WTC11 (cell line): ENCODE measurements at regions of chr11 and their contacts with region 1.

Region 1: GRCh38 chr11:120645639-120646038 is 134.1 kb downstream of the GRIK4 start:
- DNase-seq: peak; percentile 85
- ATAC-seq: peak; percentile 76
- H3K4me3 Mint-ChIP-seq: peak overlapping the region; percentile 48
- H3K27ac Mint-ChIP-seq: no peak overlapping the region
- H3K4me1 Mint-ChIP-seq: peaks cover 46% of the 10 kb centered on the region
- H3K27me3 Mint-ChIP-seq: peaks cover 98% of the 10 kb centered on the region
- CTCF ChIP-seq: no peak

Region 2: GRCh38 chr11:120511116-120511819 is 134.4 kb before region 1 on chr11 and contains the start of gene GRIK4:
- CTCF ChIA-PET with region 1: interaction called, 15 read pairs
- POLR2A ChIA-PET with region 1: no interaction called
- DNase-seq: peak; percentile 92
- ATAC-seq: peak; percentile 87
- H3K4me3 Mint-ChIP-seq: peak within 1 kb of the TSS; percentile 61
- H3K27ac Mint-ChIP-seq: no peak within 1 kb of the TSS
- H3K4me1 Mint-ChIP-seq: peaks cover 11% of the 10 kb centered on the region
- H3K27me3 Mint-ChIP-seq: peaks cover 25% of the 10 kb centered on the region
- CTCF ChIP-seq: peak; percentile 92
- total RNA-seq, gene GRIK4: 2.9 to 3.6 TPM (median 3.3 TPM) in 3 replicates

Region 3: GRCh38 chr11:120632579-120632978 is 13.1 kb before region 1 on chr11:
- CTCF ChIA-PET with region 1: interaction called, 10 read pairs
- POLR2A ChIA-PET with region 1: no interaction called
- DNase-seq: no peak
- ATAC-seq: peak; percentile 74
- H3K4me3 Mint-ChIP-seq: no peak overlapping the region
- H3K27ac Mint-ChIP-seq: no peak overlapping the region
- H3K4me1 Mint-ChIP-seq: peaks cover 34% of the 10 kb centered on the region
- H3K27me3 Mint-ChIP-seq: peaks cover 14% of the 10 kb centered on the region
- CTCF ChIP-seq: 0 out of 2 replicates have a peak, but pooled peaks have one; percentile 23

Region 4: DNA sequence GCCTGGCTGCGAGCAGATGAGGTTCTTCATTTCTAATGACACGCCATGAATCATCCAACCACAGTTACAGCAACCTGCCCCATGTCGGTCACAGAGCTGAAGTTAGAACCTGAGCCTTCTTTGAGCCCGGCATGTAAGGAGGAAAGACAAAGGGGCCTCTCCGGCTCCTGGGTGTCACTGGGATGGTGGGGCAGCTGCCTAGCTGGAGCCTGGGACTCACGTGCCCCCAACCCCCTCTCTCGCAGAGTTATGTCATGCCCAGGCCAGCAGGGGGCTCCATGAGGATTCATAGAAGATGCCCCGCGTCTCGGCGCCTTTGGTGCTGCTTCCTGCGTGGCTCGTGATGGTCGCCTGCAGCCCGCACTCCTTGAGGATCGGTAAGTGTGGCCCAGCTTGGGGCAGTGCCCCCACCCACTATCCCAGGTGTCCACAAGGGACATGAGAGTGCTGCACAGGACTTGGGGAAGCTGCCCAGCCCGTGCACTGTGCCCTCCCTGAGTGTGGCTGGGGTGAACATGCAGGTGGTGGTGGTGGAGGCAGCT is 14.5 kb after region 1 on chr11:
- CTCF ChIA-PET with region 1: interaction called, 19 read pairs
- POLR2A ChIA-PET with region 1: no interaction called
- DNase-seq: peak; percentile 84
- ATAC-seq: peak; percentile 84
- H3K4me3 Mint-ChIP-seq: no peak overlapping the region
- H3K27ac Mint-ChIP-seq: no peak overlapping the region
- H3K4me1 Mint-ChIP-seq: peaks cover 40% of the 10 kb centered on the region
- H3K27me3 Mint-ChIP-seq: peaks cover 10% of the 10 kb centered on the region
- CTCF ChIP-seq: peak; percentile 67